ENCODE measurements at regions of chr19 and their contacts with region 1.

Region 1: DNA sequence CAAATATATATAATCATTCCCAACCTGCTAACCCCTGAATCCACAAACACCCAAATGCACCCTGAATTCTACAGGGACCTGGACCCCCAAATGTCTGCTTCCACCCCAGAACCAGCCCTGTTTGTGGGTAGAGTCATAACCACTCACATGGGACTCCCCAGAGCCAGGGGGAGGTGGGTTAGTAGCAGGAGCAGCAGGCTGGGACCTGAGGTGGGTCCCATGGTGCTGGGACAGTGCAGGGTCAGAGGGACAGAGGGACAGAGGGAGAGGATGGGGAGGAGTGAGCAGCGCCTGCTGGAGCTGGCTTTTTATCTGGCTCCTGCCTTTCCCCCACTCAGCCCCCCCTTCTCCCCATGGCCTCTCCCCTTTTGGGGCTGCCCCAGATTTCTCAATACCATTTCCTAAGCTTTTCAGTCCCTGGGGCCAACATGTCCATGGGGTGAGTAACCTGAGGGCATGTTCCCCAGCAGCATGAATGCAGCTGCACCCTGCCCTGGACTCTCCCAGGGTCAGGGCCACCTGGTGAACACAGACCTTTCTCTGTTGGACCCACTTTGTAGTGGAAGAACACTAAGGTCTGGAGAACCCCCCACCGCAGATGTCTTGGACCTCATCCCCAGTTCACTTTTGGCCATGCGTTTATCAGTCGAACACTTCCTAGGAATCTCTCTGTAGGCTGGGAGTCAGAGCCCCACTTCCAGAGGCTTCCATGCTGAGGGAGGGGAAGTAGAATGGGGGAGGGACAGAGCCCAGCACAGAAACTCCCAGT is at the start of gene C3:
- DNase-seq: no peak
- H3K4me3 ChIP-seq: no peak within 1 kb of the TSS
- H3K27ac ChIP-seq: peak within 1 kb of the TSS in 6 of 8 donors; percentile 27 to 75 (median 52)
- H3K4me1 ChIP-seq: peaks cover 3 to 55% (median 42%) of the 10 kb centered on the region in 6 donors
- H3K27me3 ChIP-seq: peaks cover 0 to 6% (median 0%) of the 10 kb centered on the region in 7 donors
- CTCF ChIP-seq: no peak
- POLR2A ChIP-seq: no peak
- total RNA-seq, gene C3: 5.8 to 68.1 (median 19.7) TPM

Region 2: GRCh38 chr19:6649185-6649584 is 71.4 kb before region 1 on chr19:
- intact Hi-C with region 1: loop called (anchors 10 kb)
- DNase-seq: no peak
- H3K4me3 ChIP-seq: no peak overlapping the region
- H3K27ac ChIP-seq: no peak overlapping the region
- H3K4me1 ChIP-seq: peaks cover 0 to 13% (median under 1%) of the 10 kb centered on the region in 6 donors
- H3K27me3 ChIP-seq: peaks cover 0 to 28% (median 0%) of the 10 kb centered on the region in 7 donors
- CTCF ChIP-seq: no peak
- POLR2A ChIP-seq: no peak

Measured in spleen (tissue), 13 donors.